ENCODE measurements at regions of chr18 and their contacts with region 1.

Region 1: DNA sequence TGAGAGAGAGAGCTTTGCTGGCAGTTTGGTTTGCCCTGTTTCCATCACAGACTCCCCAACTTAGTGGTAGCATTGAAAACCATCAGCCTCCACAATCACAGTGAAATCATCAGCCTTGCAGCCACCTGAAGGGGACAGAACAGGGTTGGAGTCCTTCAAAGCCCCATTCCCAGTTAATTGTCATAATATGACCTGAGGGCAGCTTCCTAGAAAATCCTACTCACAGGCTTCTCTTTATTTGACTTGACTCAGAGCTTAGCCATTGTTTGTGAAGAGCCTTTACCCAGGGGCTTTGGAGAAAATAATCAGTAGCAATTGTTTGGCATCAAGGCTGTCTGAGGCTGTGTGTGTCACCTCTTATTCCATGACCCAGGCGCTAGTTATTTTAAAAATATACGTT is 308.7 kb downstream of the CBLN2 start:
- DNase-seq: no peak
- H3K4me3 ChIP-seq: no peak overlapping the region
- H3K27ac ChIP-seq: no peak overlapping the region
- H3K4me1 ChIP-seq: no peaks in the 10 kb centered on the region
- H3K27me3 ChIP-seq: no peaks in the 10 kb centered on the region
- CTCF ChIP-seq: no peak

Region 2: GRCh38 chr18:72187956-72188355 is 47.5 kb before region 1 on chr18:
- intact Hi-C with region 1: loop called (anchors 5 kb)
- DNase-seq: no peak
- H3K4me3 ChIP-seq: no peak overlapping the region
- H3K27ac ChIP-seq: no peak overlapping the region
- H3K4me1 ChIP-seq: no peaks in the 10 kb centered on the region
- H3K27me3 ChIP-seq: no peaks in the 10 kb centered on the region
- CTCF ChIP-seq: no peak

Region 3: GRCh38 chr18:72768681-72769229 is 533.3 kb after region 1 on chr18:
- intact Hi-C with region 1: no loop called
- DNase-seq: no peak
- H3K4me3 ChIP-seq: no peak overlapping the region
- H3K27ac ChIP-seq: no peak overlapping the region
- H3K4me1 ChIP-seq: no peaks in the 10 kb centered on the region
- H3K27me3 ChIP-seq: no peaks in the 10 kb centered on the region
- CTCF ChIP-seq: no peak

Measured in kidney (tissue), 22 donors.